Dendritic cell treated with granulocyte-macrophage colony-stimulating factor and Interleukin-4, amounts not matched to agents 40 ng/mL and 50 ng/mL, for 4 days (primary cell): ENCODE measurements at regions of chr1 and their contacts with region 1.

Region 1: DNA sequence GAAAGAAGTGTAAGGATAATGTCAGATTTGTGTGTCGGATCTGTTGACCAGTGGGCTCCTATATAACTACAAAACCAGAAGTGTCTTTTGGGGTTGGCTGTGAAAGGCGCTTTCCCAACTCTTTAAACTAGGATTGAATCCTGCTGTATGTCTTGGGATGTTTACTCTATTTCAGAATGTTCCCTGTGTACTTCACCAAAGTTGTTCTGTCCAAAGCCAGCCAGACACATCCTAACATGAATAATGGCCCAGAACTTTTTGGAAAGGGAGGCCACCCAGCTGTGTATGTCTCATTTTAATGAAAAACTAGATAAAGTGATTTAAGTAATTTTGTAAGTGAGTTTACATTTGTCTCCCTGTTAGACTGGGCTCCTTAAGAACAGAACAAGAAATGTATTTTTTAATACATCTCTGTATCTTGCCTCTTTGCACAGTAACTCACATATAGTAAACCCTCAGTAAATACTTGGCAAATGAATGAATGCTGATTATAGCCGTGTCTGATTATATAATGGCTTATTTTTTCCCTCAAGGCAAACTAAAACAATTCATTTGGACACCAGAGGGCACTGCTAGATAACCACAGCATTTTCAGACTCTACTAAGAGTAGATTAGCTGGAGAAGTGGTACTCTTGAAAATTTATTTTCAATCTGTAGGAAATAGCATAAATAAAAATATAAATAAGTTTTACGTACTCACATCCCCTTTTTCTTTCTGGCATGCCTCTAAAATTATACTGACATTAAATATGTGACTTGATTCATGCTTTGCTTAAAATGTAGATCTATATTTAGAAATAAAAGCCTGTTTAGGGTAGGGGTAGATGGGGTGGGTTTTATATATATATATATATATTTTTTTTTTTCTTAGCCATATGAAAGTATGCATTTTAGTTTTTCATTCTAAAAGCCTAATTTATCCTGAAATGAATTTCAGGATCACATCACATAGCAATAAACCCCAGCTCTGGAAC is 23.8 kb downstream of the TSEN15 start:
- H3K4me3 Mint-ChIP-seq: no peak overlapping the region
- H3K27ac Mint-ChIP-seq: no peak overlapping the region
- H3K4me1 Mint-ChIP-seq: no peaks in the 10 kb centered on the region
- H3K27me3 Mint-ChIP-seq: no peaks in the 10 kb centered on the region

Region 2: DNA sequence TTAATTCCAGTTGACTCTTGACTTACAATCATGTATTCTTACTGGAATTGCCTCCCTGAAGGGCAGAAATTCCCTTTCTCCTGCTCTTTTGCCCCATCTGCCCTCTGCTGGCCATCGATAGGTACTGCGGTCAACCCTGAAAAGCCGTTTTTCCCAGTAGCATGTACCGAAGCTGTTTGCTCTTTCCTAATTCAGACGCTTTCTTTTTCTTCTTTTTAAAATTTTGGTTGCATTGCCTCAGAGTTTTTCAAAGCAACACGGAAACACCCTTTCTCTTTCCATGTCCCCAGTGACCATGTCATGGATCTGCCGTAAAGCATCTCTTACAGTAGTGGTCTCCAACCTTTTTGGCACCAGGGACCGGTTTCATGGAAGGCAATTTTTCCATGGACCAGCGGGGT is 147.3 kb after region 1 on chr1:
- intact Hi-C with region 1: loop called (anchors 1 kb)
- H3K4me3 Mint-ChIP-seq: no peak overlapping the region
- H3K27ac Mint-ChIP-seq: no peak overlapping the region
- H3K4me1 Mint-ChIP-seq: peaks cover 8% of the 10 kb centered on the region
- H3K27me3 Mint-ChIP-seq: no peaks in the 10 kb centered on the region

Region 3: GRCh38 chr1:184563308-184563707 is 488.0 kb after region 1 on chr1:
- intact Hi-C with region 1: loop called (anchors 2 kb)
- H3K4me3 Mint-ChIP-seq: no peak overlapping the region
- H3K27ac Mint-ChIP-seq: no peak overlapping the region
- H3K4me1 Mint-ChIP-seq: peaks cover 20% of the 10 kb centered on the region
- H3K27me3 Mint-ChIP-seq: no peaks in the 10 kb centered on the region

Region 4: GRCh38 chr1:184664042-184664655 is 588.8 kb after region 1 on chr1:
- intact Hi-C with region 1: loop called (anchors 1 kb)
- H3K4me3 Mint-ChIP-seq: peak overlapping the region; percentile 71
- H3K27ac Mint-ChIP-seq: peak overlapping the region; percentile 25
- H3K4me1 Mint-ChIP-seq: peaks cover 10% of the 10 kb centered on the region
- H3K27me3 Mint-ChIP-seq: peaks cover 12% of the 10 kb centered on the region

Region 5: GRCh38 chr1:184691719-184692324 is 616.5 kb after region 1 on chr1:
- intact Hi-C with region 1: loop called (anchors 10 kb)
- H3K4me3 Mint-ChIP-seq: no peak overlapping the region
- H3K27ac Mint-ChIP-seq: no peak overlapping the region
- H3K4me1 Mint-ChIP-seq: peaks cover 20% of the 10 kb centered on the region
- H3K27me3 Mint-ChIP-seq: no peaks in the 10 kb centered on the region